Activated CD8-positive, alpha-beta T cell treated with anti-CD3 and anti-CD28 coated beads, Interleukin-2, amount 10 ng/mL, durations not matched to agents 7 days and 5 days (primary cell): ENCODE measurements at regions of chr4 and their contacts with region 1.

Region 1: GRCh38 chr4:112516471-112517066 is 589 bp upstream of the NEUROG2 start:
- DNase-seq: no peak
- ATAC-seq: no peak
- H3K4me3 Mint-ChIP-seq: peak overlapping the region; percentile 77
- H3K27ac Mint-ChIP-seq: no peak overlapping the region
- H3K4me1 Mint-ChIP-seq: peaks cover 70% of the 10 kb centered on the region
- H3K27me3 Mint-ChIP-seq: peaks cover 90% of the 10 kb centered on the region

Region 2: GRCh38 chr4:112234952-112235609 is 281.5 kb before region 1 on chr4:
- CTCF ChIA-PET with region 1: no interaction called
- POLR2A ChIA-PET with region 1: no interaction called
- DNase-seq: peak; percentile 70
- ATAC-seq: no peak
- H3K4me3 Mint-ChIP-seq: no peak overlapping the region
- H3K27ac Mint-ChIP-seq: no peak overlapping the region
- H3K4me1 Mint-ChIP-seq: peaks cover 32% of the 10 kb centered on the region
- H3K27me3 Mint-ChIP-seq: no peaks in the 10 kb centered on the region

Region 3: GRCh38 chr4:112502871-112503270 is 13.7 kb before region 1 on chr4:
- CTCF ChIA-PET with region 1: interaction called, 10 read pairs
- POLR2A ChIA-PET with region 1: no interaction called
- DNase-seq: no peak
- ATAC-seq: no peak
- H3K4me3 Mint-ChIP-seq: no peak overlapping the region
- H3K27ac Mint-ChIP-seq: no peak overlapping the region
- H3K4me1 Mint-ChIP-seq: no peaks in the 10 kb centered on the region
- H3K27me3 Mint-ChIP-seq: peaks cover 54% of the 10 kb centered on the region